Activated CD4-positive, alpha-beta memory T cell treated with anti-CD3 and anti-CD28 coated beads for 36 hours (primary cell): ENCODE measurements at regions of chr2 and their contacts with region 1.

Region 1: DNA sequence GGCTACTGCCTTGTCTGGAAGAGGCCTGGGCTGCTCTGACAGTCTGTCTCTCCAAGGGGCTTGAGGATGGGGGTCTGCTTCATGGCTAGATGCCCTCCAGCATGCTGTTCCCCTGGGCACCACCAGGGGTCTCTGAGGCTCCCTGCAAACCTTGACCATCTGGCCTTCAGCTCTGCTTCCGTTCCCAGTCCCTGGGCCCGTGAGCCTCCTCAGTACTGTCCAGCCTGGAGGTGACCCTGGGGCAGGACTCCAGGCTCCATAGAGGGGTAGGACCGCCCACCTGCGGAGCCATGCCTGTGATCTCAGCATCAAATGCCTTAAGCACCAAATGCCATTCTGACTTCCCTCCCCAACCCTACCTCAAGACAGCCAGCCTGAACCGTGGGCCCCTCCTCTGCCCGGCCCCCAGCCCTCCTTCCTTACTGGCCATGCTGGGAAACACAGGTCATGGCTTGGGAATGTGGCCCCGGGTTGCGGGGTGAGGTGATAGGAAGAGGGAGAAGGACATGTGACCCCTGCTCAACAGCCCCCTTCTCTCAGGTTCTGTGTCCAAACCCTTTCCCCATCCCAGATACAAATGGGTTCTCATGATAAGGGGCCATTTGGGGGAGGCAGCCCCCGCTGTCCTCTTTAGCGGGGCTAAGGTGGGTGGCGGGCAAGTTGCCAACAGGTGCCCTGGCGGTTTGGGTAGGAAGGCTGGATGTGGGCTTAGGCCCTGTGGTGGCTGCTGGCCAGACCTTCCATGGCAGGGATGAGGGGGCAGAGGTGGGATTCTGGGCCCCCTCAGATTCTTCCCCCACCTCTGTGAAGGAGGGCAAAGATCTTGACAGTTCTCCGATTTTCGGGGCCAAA is 25.0 kb downstream of the SPEG start:
- DNase-seq: peak; percentile 51
- H3K4me3 Mint-ChIP-seq: no peak overlapping the region
- H3K27ac Mint-ChIP-seq: no peak overlapping the region
- H3K4me1 Mint-ChIP-seq: peaks cover 5% of the 10 kb centered on the region
- H3K27me3 Mint-ChIP-seq: no peaks in the 10 kb centered on the region

Region 2: GRCh38 chr2:219475697-219476651 is 16.3 kb after region 1 on chr2:
- CTCF ChIA-PET with region 1: interaction called, 16 read pairs
- POLR2A ChIA-PET with region 1: no interaction called
- intact Hi-C with region 1: no loop called
- DNase-seq: peak; percentile 78
- H3K4me3 Mint-ChIP-seq: no peak overlapping the region
- H3K27ac Mint-ChIP-seq: no peak overlapping the region
- H3K4me1 Mint-ChIP-seq: peaks cover 4% of the 10 kb centered on the region
- H3K27me3 Mint-ChIP-seq: peaks cover 3% of the 10 kb centered on the region